A549 (cell line): ENCODE measurements at regions of chr20 and their contacts with region 1.

Region 1: DNA sequence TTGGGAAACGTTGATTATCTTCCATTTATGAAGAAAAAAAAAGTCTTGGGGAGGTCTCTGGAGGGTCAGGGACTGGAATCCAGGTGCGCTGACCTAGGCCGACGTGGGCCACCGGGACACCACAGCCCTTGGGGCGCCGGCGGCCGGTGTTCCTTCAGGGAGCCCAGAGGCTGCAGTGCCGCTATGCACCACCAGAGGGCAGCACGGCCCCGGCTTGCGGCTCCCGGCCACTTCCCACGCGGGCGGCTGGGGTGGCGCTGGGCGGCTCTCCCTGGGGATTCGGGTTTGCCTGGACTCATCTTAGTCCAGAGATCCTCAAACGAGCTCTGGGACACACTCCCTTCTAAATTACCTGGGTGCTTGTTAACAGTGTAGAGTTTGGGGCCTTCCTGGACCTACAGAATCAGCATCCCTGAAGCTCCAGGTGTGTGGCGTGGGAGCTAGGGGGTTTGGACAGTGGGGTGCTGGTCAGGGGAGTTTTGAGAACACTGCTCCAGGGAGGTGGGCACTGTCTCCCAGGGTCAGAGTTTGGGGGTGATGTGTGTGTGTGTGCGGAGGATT is 23.0 kb upstream of the GTSF1L start:
- DNase-seq: peak; percentile 44 to 78
- ATAC-seq: peak; percentile 92 to 95
- H3K4me3 ChIP-seq: no peak overlapping the region
- H3K27ac ChIP-seq: peak overlapping the region; percentile 34 to 69; a peak in 5 of 6 replicates
- H3K4me1 ChIP-seq: peaks cover 7% of the 10 kb centered on the region; the same call in 2 of the 3 replicates
- CTCF ChIP-seq: peak; percentile 94
- EP300 ChIP-seq: no peak
- POLR2A ChIP-seq: no peak
- RAD21 ChIP-seq: peak; percentile 94 to 99

Region 2: DNA sequence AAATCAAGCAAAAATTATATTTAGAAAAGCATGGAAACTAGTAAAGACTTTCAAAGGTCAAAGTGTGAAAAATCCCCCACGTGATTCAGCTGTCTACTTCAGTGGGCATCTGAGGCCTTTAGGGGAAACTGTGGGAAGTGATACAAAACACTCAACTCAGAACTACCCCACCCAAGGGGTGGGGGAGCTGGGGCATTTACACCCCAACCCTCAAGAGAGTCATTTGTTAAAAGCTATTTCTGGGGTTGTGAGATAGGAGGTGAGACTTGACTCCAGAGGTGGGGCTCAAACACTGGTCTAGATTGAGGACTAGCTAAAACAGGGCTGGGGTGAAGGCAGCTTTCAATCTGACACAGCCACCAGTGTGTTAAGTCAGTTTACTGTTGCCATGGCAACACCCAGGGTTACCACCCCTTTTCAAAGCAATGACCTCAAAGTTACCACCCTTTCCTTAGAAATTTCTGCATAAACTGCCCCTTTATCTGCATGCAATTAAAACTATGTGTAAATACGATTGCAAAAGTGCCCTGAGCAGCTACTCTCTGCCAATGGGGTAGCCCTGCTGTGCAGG is 13.1 kb before region 1 on chr20:
- CTCF ChIA-PET with region 1: interaction called, 39 read pairs
- POLR2A ChIA-PET with region 1: no interaction called
- DNase-seq: no peak
- ATAC-seq: no peak
- H3K4me3 ChIP-seq: no peak overlapping the region
- H3K27ac ChIP-seq: no peak overlapping the region
- H3K4me1 ChIP-seq: no peaks in the 10 kb centered on the region
- CTCF ChIP-seq: no peak
- EP300 ChIP-seq: no peak
- POLR2A ChIP-seq: no peak
- RAD21 ChIP-seq: no peak

Region 3: GRCh38 chr20:43776643-43777042 is 26.8 kb after region 1 on chr20:
- CTCF ChIA-PET with region 1: interaction called, 12 read pairs
- POLR2A ChIA-PET with region 1: no interaction called
- DNase-seq: no peak
- ATAC-seq: no peak
- H3K4me3 ChIP-seq: no peak overlapping the region
- H3K27ac ChIP-seq: no peak overlapping the region
- H3K4me1 ChIP-seq: no peaks in the 10 kb centered on the region
- CTCF ChIP-seq: no peak
- EP300 ChIP-seq: no peak
- POLR2A ChIP-seq: no peak
- RAD21 ChIP-seq: no peak

Region 4: GRCh38 chr20:43840382-43841070 is 90.7 kb after region 1 on chr20:
- CTCF ChIA-PET with region 1: interaction called, 25 read pairs
- POLR2A ChIA-PET with region 1: no interaction called
- DNase-seq: peak; percentile 40 to 80
- ATAC-seq: peak; percentile 66 to 85; a peak in 5 of 6 replicates
- H3K4me3 ChIP-seq: no peak overlapping the region
- H3K27ac ChIP-seq: no peak overlapping the region
- H3K4me1 ChIP-seq: peaks cover 26% of the 10 kb centered on the region
- CTCF ChIP-seq: peak; percentile 45
- EP300 ChIP-seq: no peak
- POLR2A ChIP-seq: no peak
- RAD21 ChIP-seq: peak; percentile 29 to 32; a peak in 2 of 5 replicates

Region 5: GRCh38 chr20:44056010-44056698 is 306.3 kb after region 1 on chr20:
- CTCF ChIA-PET with region 1: interaction called, 28 read pairs
- POLR2A ChIA-PET with region 1: no interaction called
- DNase-seq: peak; percentile 19 to 36
- ATAC-seq: peak; percentile 89 to 91
- H3K4me3 ChIP-seq: no peak overlapping the region
- H3K27ac ChIP-seq: no peak overlapping the region
- H3K4me1 ChIP-seq: no peaks in the 10 kb centered on the region
- CTCF ChIP-seq: peak; percentile 33; the same call in 2 of the 3 replicates
- EP300 ChIP-seq: no peak
- POLR2A ChIP-seq: no peak
- RAD21 ChIP-seq: peak; percentile 44 to 56

Region 6: DNA sequence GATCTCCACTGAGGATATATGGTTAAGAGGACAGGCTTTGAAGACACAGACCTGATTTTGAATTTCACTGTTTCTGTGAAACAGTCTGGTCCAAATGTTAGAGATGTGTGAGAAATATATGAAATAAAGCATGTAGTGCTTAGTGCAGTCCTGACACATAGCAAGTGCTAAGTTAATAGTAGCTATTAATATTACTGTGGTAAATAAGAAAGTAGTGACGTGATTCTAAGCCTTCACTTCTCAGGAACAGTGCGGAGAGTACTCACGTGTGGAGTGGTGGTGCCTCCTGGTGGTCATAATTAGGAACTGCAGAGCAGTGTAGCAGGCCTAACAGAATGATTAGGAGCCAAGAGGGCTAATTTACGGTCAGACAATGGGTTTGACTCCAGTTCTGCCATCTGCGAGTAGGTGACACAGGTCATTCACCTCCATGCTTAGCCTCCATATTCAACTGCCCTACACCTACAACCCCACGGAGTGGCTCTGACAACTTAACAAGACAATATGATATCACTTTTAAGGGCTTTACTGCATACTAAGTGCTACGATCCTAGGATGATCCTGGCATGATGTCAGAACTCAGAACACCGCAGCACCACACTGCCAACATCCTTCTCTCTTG is 330.9 kb after region 1 on chr20:
- CTCF ChIA-PET with region 1: interaction called, 210 read pairs
- POLR2A ChIA-PET with region 1: no interaction called
- DNase-seq: peak; percentile 77 to 85
- ATAC-seq: peak; percentile 91 to 98
- H3K4me3 ChIP-seq: no peak overlapping the region
- H3K27ac ChIP-seq: peak overlapping the region in 1 of 2 experiments; percentile 16; a peak in 1 of 6 replicates
- H3K4me1 ChIP-seq: no peaks in the 10 kb centered on the region
- CTCF ChIP-seq: peak; percentile 96
- EP300 ChIP-seq: no peak
- POLR2A ChIP-seq: no peak
- RAD21 ChIP-seq: peak; percentile 98 to 99

Region 7: DNA sequence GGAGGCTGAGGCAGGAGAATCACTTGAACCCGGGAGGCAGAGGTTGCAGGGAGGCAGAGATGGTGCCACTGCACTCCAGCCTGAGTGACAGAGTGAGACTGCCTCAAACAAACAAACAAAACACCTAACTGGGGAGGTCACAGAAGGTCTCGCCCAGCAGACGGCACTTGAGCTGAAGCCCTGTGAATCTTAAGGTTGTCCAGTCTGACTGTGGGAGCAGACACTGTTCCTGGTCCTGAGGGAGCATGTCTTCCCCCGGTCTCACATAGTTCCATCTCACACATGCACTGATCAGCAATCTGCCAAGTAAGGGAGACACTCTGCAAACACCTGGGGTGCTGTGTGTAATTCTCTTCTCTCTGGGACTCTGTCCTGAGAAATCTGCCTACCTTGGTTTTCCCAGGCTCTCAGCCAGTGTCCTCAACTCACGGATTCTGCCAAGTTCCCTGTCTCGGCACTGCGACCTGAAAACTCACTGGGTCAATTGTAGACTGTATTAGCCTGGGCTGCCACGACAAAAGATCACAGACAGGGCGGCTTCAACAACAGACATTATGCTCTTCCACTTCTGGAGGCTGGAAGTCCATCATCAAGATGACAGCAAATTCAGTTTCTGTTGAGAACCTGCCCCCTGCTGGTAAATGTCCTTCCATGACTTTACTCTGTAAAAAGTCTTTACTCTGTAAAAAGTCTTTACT is 342.9 kb after region 1 on chr20:
- CTCF ChIA-PET with region 1: interaction called, 14 read pairs
- POLR2A ChIA-PET with region 1: no interaction called
- DNase-seq: peak in 1 of 2 experiments; percentile 60
- ATAC-seq: peak; percentile 66 to 80; a peak in 3 of 6 replicates
- H3K4me3 ChIP-seq: no peak overlapping the region
- H3K27ac ChIP-seq: no peak overlapping the region
- H3K4me1 ChIP-seq: peaks cover 4% of the 10 kb centered on the region; the same call in 2 of the 3 replicates
- CTCF ChIP-seq: peak; percentile 66
- EP300 ChIP-seq: no peak
- POLR2A ChIP-seq: no peak
- RAD21 ChIP-seq: peak; percentile 59 to 61